Activated naive CD4-positive, alpha-beta T cell treated with anti-CD3 and anti-CD28 coated beads for 36 hours (primary cell): ENCODE measurements at regions of chr15 and their contacts with region 1.

Region 1: GRCh38 chr15:44570361-44570760 is 33.4 kb downstream of the EIF3J start:
- DNase-seq: no peak
- H3K4me3 Mint-ChIP-seq: no peak overlapping the region
- H3K27ac Mint-ChIP-seq: no peak overlapping the region
- H3K4me1 Mint-ChIP-seq: no peaks in the 10 kb centered on the region
- H3K27me3 Mint-ChIP-seq: no peaks in the 10 kb centered on the region

Region 2: GRCh38 chr15:44489464-44489863 is 80.9 kb before region 1 on chr15:
- CTCF ChIA-PET with region 1: no interaction called
- intact Hi-C with region 1: no loop called
- DNase-seq: no peak
- H3K4me3 Mint-ChIP-seq: no peak overlapping the region
- H3K27ac Mint-ChIP-seq: no peak overlapping the region
- H3K4me1 Mint-ChIP-seq: peaks cover 41% of the 10 kb centered on the region
- H3K27me3 Mint-ChIP-seq: no peaks in the 10 kb centered on the region

Region 3: GRCh38 chr15:44918136-44918535 is 347.8 kb after region 1 on chr15:
- CTCF ChIA-PET with region 1: no interaction called
- intact Hi-C with region 1: loop called (anchors 5 kb)
- DNase-seq: no peak
- H3K4me3 Mint-ChIP-seq: no peak overlapping the region
- H3K27ac Mint-ChIP-seq: no peak overlapping the region
- H3K4me1 Mint-ChIP-seq: no peaks in the 10 kb centered on the region
- H3K27me3 Mint-ChIP-seq: peaks cover 2% of the 10 kb centered on the region

Region 4: GRCh38 chr15:45022871-45023658 is 452.7 kb after region 1 on chr15 and contains the start of gene SORD:
- CTCF ChIA-PET with region 1: no interaction called
- intact Hi-C with region 1: loop called (anchors 10 kb)
- DNase-seq: peak; percentile 94
- H3K4me3 Mint-ChIP-seq: peak within 1 kb of the TSS; percentile 83
- H3K27ac Mint-ChIP-seq: peak within 1 kb of the TSS; percentile 46
- H3K4me1 Mint-ChIP-seq: peaks cover 14% of the 10 kb centered on the region
- H3K27me3 Mint-ChIP-seq: peaks cover 7% of the 10 kb centered on the region
- total RNA-seq, gene SORD: 23.1 to 23.8 TPM